GM13977 (cell line): ENCODE measurements at regions of chr2 and their contacts with region 1.

Region 1: DNA sequence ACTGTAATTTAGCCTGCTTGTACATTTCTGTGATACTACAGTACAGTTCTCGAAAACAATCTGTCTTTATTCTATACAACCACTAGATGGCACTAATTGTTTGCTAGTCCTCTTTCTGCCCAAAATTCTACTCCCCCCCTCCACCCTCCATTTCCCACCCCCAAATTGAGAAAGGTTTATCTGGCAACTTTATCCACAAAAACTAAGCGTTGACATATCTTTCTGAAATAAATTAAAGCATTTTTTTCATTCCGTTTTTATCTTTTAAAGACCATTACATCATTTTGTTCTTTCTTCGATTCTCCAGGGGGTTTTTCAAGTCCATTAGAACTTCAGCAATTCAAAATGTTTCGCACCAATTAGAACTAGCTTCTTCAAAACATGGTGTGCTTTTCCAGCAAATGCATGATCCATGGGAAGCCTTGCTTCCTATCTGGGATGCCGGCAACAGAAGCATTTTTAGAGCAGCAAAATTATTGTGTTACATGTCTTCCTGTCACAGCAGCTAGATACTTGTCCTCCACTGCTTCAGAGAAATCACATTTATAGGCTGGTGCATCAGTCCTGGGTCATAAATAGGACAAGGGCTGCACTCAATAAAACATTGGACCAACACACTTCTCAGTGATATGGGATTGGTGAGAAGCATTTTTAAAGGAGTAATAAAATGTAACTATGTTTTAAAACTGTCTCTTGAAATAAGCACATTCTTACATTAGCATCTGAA is 241.3 kb downstream of the PAX3 start:
- DNase-seq: peak; percentile 43
- CTCF ChIP-seq: peak; percentile 56

Region 2: GRCh38 chr2:222290736-222291484 is 233.4 kb after region 1 on chr2:
- in situ Hi-C with region 1: loop called (anchors 25 kb)
- DNase-seq: peak; percentile 17
- CTCF ChIP-seq: no peak

Region 3: DNA sequence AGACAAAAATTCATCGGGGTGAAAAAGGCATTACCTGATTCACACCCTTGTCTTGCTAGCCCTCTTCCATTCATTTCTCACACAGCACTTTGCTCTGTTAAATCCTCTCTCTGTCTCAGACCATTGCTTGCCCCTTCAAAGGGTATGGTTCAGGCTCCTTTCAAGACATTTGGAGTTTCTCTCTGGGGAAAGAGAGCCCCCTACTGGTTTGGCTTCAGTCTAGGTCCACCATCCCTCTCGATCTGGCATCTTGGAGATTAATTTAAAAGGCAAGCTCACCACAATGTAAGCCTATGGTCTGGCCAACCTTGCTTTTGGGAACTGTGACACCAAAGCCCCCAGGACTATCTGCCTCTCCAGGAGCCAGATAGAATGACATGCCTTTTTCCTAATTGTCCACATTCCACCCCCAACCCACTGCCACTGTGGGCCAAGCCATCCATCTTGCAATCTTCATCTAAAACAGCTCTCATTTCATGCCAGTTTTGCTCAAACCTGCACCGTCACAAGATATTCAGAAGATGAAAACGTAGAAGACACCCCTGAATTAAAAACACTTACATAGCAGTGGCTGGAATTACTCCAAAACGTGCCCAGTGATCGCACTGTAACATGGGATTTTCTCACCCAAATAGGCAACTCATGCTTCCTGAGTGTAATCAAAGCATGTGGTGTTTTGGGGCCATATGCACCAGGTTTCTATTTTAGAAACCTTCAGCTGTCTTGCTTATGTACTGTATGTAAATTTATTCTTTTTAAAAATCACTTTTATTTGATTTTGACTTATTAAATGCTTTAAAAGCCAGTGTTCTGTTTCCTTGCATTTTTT is 504.5 kb after region 1 on chr2:
- in situ Hi-C with region 1: loop called (anchors 25 kb)
- DNase-seq: peak; percentile 70
- CTCF ChIP-seq: peak; percentile 75